ENCODE measurements at regions of chr1 and their contacts with region 1.

Region 1: GRCh38 chr1:239898062-239898730 is 193.5 kb upstream of the FMN2 start:
- DNase-seq: peak; percentile 50
- ATAC-seq: peak; percentile 97
- H3K4me3 ChIP-seq: no peak overlapping the region
- H3K27ac ChIP-seq: no peak overlapping the region
- H3K4me1 ChIP-seq: no peaks in the 10 kb centered on the region
- H3K27me3 ChIP-seq: peaks cover 0 to 1% of the 10 kb centered on the region in 2 experiments; a peak in 1 of 5 replicates
- CTCF ChIP-seq: peak; percentile 90
- EP300 ChIP-seq: no peak
- POLR2A ChIP-seq: no peak
- RAD21 ChIP-seq: peak; percentile 77

Region 2: DNA sequence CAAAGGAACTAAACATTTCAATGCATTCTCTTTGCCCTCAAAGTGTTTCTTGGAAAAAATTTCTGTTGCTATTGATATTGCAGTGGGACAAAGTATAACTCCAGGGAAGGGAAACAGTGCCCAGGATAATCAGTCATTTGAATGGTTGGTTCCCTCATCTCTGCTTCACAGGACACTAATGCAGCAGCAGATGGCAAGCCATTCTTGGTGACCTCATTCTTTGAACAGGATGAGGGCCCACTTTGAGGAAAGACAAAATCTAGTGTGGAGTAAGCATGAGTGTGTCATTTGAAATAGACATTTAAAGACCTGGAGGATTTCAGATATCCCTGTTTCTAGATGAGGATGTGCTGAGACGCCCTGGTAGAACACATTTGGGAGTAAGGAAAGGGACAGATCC is 479.5 kb before region 1 on chr1:
- CTCF ChIA-PET with region 1: no interaction called
- POLR2A ChIA-PET with region 1: no interaction called
- in situ Hi-C with region 1: loop called (anchors 25 kb)
- intact Hi-C with region 1: no loop called
- DNase-seq: no peak
- ATAC-seq: no peak
- H3K4me3 ChIP-seq: no peak overlapping the region
- H3K27ac ChIP-seq: no peak overlapping the region
- H3K4me1 ChIP-seq: no peaks in the 10 kb centered on the region
- H3K27me3 ChIP-seq: no peaks in the 10 kb centered on the region
- CTCF ChIP-seq: no peak
- EP300 ChIP-seq: no peak
- POLR2A ChIP-seq: no peak
- RAD21 ChIP-seq: no peak

Region 3: DNA sequence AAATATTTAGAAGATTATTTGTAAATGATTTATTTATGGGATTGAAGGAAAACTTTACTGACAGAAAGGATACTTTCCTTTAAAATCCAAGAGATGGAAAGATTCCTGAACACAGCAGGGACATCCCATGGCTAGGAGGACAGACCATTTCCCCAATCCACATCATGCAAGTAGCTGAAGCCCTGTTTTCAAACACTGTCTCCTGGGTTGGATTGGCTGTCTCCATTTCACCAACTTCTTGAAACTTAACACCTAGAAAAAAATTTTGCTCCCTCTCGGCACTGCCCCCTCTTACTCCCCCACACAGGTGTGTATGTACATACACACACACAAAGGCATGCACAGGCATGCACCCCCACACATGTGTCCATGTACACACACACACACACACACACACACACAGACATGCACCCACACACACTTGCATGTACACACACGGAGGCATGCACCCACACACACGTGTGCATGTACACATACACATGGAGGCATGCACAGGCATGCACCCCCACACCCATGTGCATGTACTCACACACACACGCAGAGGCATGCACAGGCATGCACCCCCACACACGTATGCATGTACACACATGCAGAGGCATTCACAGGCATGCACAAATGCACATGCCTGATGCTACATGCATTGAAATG is 191.8 kb before region 1 on chr1:
- CTCF ChIA-PET with region 1: no interaction called
- POLR2A ChIA-PET with region 1: no interaction called
- in situ Hi-C with region 1: no loop called
- intact Hi-C with region 1: no loop called
- DNase-seq: no peak
- ATAC-seq: no peak
- H3K4me3 ChIP-seq: no peak overlapping the region
- H3K27ac ChIP-seq: no peak overlapping the region
- H3K4me1 ChIP-seq: no peaks in the 10 kb centered on the region
- H3K27me3 ChIP-seq: no peaks in the 10 kb centered on the region
- CTCF ChIP-seq: no peak
- EP300 ChIP-seq: no peak
- POLR2A ChIP-seq: no peak
- RAD21 ChIP-seq: no peak

Measured in HepG2 (cell line).